ENCODE measurements at regions of chrX and their contacts with region 1.

Region 1: DNA sequence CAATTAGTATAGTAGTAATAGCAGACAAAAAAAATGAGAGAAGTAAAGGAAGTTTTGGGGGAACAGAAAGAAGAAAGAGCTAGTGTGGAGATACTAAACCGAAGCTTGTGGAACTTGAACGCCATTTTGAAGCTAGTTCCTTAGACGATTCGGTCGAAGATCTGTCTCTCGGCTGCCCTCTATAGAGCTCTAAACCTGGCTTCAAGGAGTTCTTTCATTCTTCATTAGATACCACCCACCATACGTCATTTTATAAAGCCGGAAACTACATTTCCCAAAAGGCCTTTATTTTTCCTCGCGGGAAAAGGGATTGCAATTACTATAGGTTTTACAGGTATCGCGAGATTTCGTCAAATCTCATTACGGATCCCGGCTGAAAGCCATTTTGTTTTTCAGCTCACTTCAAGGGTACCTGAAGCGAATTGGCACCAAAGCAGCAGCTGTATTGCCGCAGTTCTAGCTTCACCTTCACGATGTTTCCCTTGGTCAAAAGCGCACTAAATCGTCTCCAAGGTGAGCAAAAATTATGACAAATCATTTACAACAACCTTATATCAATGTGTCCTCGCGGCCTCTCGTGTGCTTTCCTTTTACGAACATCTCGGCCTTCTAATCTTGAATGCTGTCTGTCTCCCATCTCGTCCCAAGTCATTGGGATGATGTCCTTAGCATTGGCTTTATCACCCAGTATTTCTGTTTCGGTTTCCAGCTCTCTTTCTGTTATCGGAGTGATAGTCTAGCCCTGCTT is at the start of gene COX7B:
- DNase-seq: peak; percentile 76
- H3K4me3 Mint-ChIP-seq: peak within 1 kb of the TSS; percentile 92
- H3K27ac Mint-ChIP-seq: peak within 1 kb of the TSS; percentile 95
- H3K4me1 Mint-ChIP-seq: peaks cover 17% of the 10 kb centered on the region
- H3K27me3 Mint-ChIP-seq: no peaks in the 10 kb centered on the region
- total RNA-seq, gene COX7B: 363 to 367 TPM

Region 2: GRCh38 chrX:76427560-76428242 is 1471.6 kb before region 1 on chrX and contains the start of gene MAGEE1:
- CTCF ChIA-PET with region 1: no interaction called
- intact Hi-C with region 1: loop called (anchors 5 kb)
- DNase-seq: peak; percentile 82
- H3K4me3 Mint-ChIP-seq: peak within 1 kb of the TSS; percentile 81
- H3K27ac Mint-ChIP-seq: peak within 1 kb of the TSS; percentile 50
- H3K4me1 Mint-ChIP-seq: peaks cover 25% of the 10 kb centered on the region
- H3K27me3 Mint-ChIP-seq: no peaks in the 10 kb centered on the region
- total RNA-seq, gene MAGEE1: 3.0 to 3.1 TPM

Region 3: GRCh38 chrX:77003956-77004355 is 895.3 kb before region 1 on chrX:
- CTCF ChIA-PET with region 1: no interaction called
- intact Hi-C with region 1: loop called (anchors 5 kb)
- DNase-seq: peak; percentile 72
- H3K4me3 Mint-ChIP-seq: no peak overlapping the region
- H3K27ac Mint-ChIP-seq: peak overlapping the region; percentile 75
- H3K4me1 Mint-ChIP-seq: peaks cover 16% of the 10 kb centered on the region
- H3K27me3 Mint-ChIP-seq: peaks cover 3% of the 10 kb centered on the region

Region 4: GRCh38 chrX:77668391-77669237 is 230.6 kb before region 1 on chrX:
- CTCF ChIA-PET with region 1: no interaction called
- intact Hi-C with region 1: loop called (anchors 10 kb)
- DNase-seq: no peak
- H3K4me3 Mint-ChIP-seq: no peak overlapping the region
- H3K27ac Mint-ChIP-seq: no peak overlapping the region
- H3K4me1 Mint-ChIP-seq: peaks cover 12% of the 10 kb centered on the region
- H3K27me3 Mint-ChIP-seq: no peaks in the 10 kb centered on the region

Region 5: GRCh38 chrX:77910108-77910840 is 11.0 kb after region 1 on chrX and contains the start of gene ATP7A:
- CTCF ChIA-PET with region 1: interaction called, 5 read pairs
- intact Hi-C with region 1: loop called (anchors 1 kb)
- DNase-seq: peak; percentile 93
- H3K4me3 Mint-ChIP-seq: peak within 1 kb of the TSS; percentile 97
- H3K27ac Mint-ChIP-seq: peak within 1 kb of the TSS; percentile 96
- H3K4me1 Mint-ChIP-seq: peaks cover 12% of the 10 kb centered on the region
- H3K27me3 Mint-ChIP-seq: no peaks in the 10 kb centered on the region
- total RNA-seq, gene ATP7A: 5.3 to 5.5 TPM

Region 6: DNA sequence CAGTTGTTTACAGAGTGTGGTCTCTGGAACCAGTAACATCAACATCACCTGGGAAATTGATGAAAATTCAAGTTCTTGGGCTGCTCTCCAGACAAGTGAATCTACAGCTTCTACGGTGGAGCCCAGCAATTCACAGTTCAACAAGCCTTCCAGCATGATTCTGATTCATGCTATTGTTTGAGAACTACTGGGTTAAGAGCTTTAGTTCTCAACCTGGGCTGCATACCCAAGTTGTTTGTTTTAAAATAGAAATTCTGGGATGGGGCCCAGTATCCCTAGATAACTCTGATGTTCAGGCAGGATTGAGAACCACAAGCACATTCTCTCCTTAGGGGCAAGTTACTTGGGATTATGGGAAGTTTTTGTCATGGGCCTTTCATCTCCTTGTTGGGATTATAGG is 166.9 kb after region 1 on chrX:
- CTCF ChIA-PET with region 1: no interaction called
- intact Hi-C with region 1: loop called (anchors 2 kb)
- DNase-seq: no peak
- H3K4me3 Mint-ChIP-seq: no peak overlapping the region
- H3K27ac Mint-ChIP-seq: no peak overlapping the region
- H3K4me1 Mint-ChIP-seq: peaks cover 14% of the 10 kb centered on the region
- H3K27me3 Mint-ChIP-seq: no peaks in the 10 kb centered on the region

Region 7: GRCh38 chrX:78945186-78945912 is 1046.1 kb after region 1 on chrX and contains the start of gene P2RY10:
- CTCF ChIA-PET with region 1: no interaction called
- intact Hi-C with region 1: loop called (anchors 10 kb)
- DNase-seq: peak; percentile 45
- H3K4me3 Mint-ChIP-seq: peak within 1 kb of the TSS; percentile 94
- H3K27ac Mint-ChIP-seq: peak within 1 kb of the TSS; percentile 98
- H3K4me1 Mint-ChIP-seq: peaks cover 54% of the 10 kb centered on the region
- H3K27me3 Mint-ChIP-seq: no peaks in the 10 kb centered on the region
- total RNA-seq, gene P2RY10: 61.9 to 63.3 TPM

Measured in activated naive CD4-positive, alpha-beta T cell treated with anti-CD3 and anti-CD28 coated beads for 36 hours (primary cell).